GM13976 (cell line): ENCODE measurements at regions of chr18 and their contacts with region 1.

Region 1: DNA sequence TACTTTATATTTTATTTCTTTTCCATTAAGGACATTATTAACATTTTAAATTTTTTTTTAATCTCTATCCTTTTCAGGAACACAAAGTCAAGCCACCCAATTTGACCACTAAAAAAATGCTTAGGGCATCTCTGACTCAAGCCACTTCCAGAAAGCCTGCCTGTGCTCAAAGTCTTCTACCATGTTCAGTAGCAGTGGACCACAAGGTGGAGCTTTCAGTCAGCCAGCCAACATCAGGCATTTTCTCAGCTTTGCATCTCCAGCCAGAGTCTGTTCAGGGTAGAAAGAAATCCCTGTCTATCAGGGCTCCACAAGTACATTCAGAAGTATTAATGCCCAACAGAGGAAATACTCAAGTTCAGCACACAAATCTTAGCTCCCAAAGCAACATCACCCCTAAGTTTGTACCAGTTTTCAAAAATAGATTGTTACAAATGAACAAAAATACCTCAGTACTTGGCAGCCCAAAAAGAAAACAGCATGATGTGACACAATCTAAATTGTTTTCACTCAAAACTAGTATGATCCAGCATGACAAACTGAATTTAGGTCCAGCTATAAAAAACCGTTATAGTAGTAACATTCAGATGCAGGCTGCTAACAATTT is 37.6 kb downstream of the C18orf63 start:
- DNase-seq: peak; percentile 36
- CTCF ChIP-seq: peak; percentile 42

Region 2: GRCh38 chr18:74495581-74496507 is 142.6 kb after region 1 on chr18 and contains the start of gene CNDP2:
- in situ Hi-C with region 1: loop called (anchors 10 kb)
- DNase-seq: peak; percentile 99
- CTCF ChIP-seq: no peak

Region 3: GRCh38 chr18:74546751-74547550 is 193.7 kb after region 1 on chr18:
- in situ Hi-C with region 1: loop called (anchors 10 kb)
- DNase-seq: no peak
- CTCF ChIP-seq: no peak

Region 4: DNA sequence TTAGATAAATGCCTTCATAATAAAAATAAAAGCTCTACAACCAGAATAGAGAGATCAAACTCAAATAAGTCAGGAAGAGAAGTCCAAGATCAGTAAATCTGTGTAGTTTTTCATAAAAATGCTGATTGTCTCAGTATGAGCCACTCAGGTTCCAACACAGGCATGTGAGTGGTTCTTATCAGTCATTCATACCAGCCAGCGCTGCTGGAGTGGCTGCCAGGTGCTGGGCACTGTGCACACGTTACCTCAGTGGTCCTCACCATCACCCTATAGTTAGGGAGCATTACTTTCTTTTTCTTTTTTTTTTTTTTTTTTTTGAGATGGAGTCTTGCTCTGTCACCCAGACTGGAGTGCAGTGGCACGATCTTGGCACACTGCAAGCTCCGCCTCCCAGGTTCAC is 204.8 kb after region 1 on chr18:
- in situ Hi-C with region 1: no loop called
- DNase-seq: no peak
- CTCF ChIP-seq: no peak